A673 (cell line): ENCODE measurements at regions of chr17 and their contacts with region 1.

Region 1: GRCh38 chr17:30134551-30134950 is 17.9 kb downstream of the NSRP1 start:
- DNase-seq: no peak
- H3K4me3 ChIP-seq: no peak overlapping the region
- H3K27ac ChIP-seq: no peak overlapping the region
- H3K4me1 ChIP-seq: no peaks in the 10 kb centered on the region
- H3K27me3 ChIP-seq: no peaks in the 10 kb centered on the region
- CTCF ChIP-seq: no peak

Region 2: GRCh38 chr17:30187573-30187972 is 53.0 kb after region 1 on chr17:
- CTCF ChIA-PET with region 1: no interaction called
- POLR2A ChIA-PET with region 1: no interaction called
- intact Hi-C with region 1: loop called (anchors 5 kb)
- DNase-seq: no peak
- H3K4me3 ChIP-seq: no peak overlapping the region
- H3K27ac ChIP-seq: no peak overlapping the region
- H3K4me1 ChIP-seq: no peaks in the 10 kb centered on the region
- H3K27me3 ChIP-seq: no peaks in the 10 kb centered on the region
- CTCF ChIP-seq: no peak

Region 3: DNA sequence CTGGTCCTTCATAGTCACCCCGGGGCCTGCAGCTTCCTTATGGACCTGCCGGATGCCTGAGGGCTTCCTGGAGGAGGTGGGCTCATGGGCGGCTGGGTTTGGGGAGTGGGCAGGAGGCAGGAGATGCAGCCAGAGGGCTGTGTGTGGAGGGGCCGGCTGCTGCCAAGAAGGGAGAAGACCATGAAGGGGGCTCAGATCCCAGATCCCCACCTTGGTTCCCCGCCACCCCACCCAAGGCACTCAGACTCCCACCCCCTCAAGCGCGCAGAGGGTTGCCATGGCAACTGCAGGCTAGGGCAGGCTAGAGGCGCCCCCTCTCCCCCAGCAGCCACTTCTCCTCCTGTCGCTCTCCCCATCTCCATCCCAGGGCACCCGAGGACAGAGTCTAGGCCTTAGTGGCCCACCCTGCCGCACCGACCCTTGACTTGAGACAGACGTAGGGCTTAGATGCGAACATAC is 585.5 kb after region 1 on chr17:
- CTCF ChIA-PET with region 1: no interaction called
- POLR2A ChIA-PET with region 1: no interaction called
- intact Hi-C with region 1: no loop called
- DNase-seq: no peak
- H3K4me3 ChIP-seq: no peak overlapping the region
- H3K27ac ChIP-seq: no peak overlapping the region
- H3K4me1 ChIP-seq: no peaks in the 10 kb centered on the region
- H3K27me3 ChIP-seq: no peaks in the 10 kb centered on the region
- CTCF ChIP-seq: no peak